GM23248 (cell line): ENCODE measurements at regions of chr10 and their contacts with region 1.

Region 1: DNA sequence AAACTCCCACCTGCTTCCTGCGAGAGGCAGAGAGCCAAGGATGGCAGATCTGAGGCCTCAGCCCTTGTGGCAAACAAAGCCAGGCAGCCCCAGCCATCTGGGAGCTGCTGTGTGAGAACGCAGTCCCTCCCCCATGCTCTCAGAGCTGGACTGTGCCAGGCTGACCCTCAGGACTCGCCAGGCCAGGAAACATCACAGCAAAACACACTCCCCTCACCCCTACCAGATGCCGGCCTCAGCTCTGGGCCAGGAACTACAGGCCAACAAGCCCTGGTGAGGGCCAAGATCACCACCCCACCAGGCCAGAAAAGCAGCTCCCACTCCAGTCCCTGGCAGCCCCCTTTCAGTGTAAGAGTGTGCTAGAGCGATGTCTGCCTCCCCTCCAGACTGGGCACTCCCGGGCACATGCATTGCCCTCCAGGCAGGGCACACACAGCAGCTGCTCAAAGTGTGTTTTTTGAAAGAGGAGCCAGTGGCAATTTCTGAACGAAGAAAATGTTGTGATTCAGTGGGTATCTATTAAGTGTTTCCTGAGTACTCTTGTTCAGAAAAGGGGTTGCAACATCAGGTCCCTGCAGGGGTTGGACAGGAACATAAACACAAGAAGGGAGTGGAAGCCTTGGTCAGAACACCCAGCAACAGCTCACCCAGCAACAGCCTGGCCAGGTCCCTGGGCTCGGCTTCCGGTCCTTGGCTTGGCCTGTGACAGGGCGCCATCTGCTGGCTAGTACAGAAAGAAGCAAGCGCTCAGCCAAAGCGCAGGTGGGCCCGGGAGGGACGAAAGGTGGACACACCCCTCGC is 18.3 kb downstream of the LRRC20 start:
- DNase-seq: peak; percentile 98
- H3K4me3 ChIP-seq: no peak overlapping the region
- H3K27ac ChIP-seq: peak overlapping the region; percentile 84
- H3K4me1 ChIP-seq: peaks cover 9% of the 10 kb centered on the region
- H3K27me3 ChIP-seq: no peaks in the 10 kb centered on the region

Region 2: DNA sequence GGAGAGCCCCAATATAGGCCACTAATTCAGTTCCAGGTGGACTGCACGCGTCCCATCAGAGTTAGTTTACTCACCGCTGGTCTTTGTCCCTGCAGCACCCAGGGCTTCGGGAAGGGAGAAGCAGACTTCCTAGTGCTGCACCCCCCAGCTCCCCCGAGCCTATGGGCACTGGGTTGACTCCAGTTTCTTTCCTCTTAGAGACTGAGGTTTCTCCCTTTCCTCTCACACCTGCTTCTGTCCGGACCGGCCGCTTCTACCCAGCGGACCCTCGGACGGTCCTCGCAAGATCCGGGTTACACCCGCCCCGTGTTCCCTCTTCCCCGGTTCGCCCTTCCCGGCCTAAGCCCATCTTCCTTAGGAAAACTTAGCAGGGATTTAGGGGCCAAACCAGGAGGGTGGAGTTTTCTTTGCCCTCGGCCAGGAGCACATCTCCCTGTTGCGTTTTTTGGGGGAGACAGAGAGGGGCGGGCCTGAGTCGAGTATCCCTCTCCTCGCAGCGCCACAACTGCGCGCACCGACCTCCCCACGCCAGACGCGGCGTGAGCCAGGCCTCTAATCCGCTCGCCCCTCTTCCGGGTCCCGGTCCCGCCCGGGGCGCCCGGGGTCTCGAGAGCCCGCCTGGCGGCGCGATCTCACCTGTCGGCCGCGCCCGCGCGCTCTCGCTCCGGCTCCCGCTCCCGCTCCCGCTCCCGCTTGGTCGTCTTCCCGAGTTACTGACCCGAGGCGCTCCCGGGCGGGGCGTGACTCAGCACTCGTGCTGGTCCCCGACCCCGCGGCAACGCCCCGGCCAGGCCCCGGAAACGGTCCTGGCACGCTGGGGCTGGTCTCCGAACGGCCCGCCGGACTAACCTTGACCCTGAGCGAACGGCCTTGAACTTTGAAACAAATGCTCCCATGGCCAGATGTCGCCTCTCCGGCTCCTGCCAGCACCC is 231.8 kb before region 1 on chr10 and contains the start of gene AIFM2:
- in situ Hi-C with region 1: no loop called
- DNase-seq: peak; percentile 91
- H3K4me3 ChIP-seq: peak within 1 kb of the TSS; percentile 74
- H3K27ac ChIP-seq: peak within 1 kb of the TSS; percentile 24; the same call in 1 of the 2 replicates
- H3K4me1 ChIP-seq: peaks cover 19% of the 10 kb centered on the region
- H3K27me3 ChIP-seq: no peaks in the 10 kb centered on the region
- total RNA-seq, gene AIFM2: 5.7 and 7.1 TPM in 2 replicates

Region 3: GRCh38 chr10:70221030-70221429 is 143.1 kb before region 1 on chr10:
- in situ Hi-C with region 1: loop called (anchors 5 kb)
- DNase-seq: no peak
- H3K4me3 ChIP-seq: no peak overlapping the region
- H3K27ac ChIP-seq: no peak overlapping the region
- H3K4me1 ChIP-seq: 0 out of 2 replicates have a peak, but pooled peaks cover 4% of the 10 kb centered on the region
- H3K27me3 ChIP-seq: no peaks in the 10 kb centered on the region

Region 4: DNA sequence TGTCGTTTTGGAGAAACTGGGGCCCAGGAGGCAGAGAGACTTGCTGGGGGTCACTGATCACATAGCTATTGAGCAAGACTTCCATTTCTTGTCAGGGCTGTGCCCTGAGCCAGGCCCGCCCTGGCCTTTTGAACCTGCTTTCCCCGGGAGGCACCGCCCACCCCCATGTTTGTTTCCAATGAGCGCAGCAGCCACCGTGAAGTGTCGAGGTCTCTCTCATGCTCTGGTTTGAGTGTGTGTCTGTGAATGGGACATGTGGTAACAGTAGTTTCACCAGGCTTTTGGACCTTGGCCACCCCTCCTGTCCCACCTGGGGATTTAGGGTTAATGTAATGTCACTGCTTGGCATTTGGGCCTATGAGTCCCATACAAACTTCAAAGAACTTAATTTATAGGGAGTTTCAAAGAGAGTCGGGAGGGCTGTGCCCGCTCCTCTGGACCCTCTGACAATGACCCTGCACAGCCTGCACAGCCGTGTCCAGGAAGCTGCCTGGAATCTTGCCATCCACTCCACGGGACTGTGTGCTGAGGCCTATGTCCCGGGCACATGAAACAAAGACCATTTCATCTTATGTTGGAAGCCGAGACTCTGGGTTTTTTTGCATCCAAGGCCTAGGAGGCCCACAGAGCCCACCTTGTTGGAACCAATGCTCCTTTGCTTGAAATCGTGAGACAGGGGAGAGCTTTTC is 232.1 kb after region 1 on chr10:
- in situ Hi-C with region 1: no loop called
- DNase-seq: no peak
- H3K4me3 ChIP-seq: no peak overlapping the region
- H3K27ac ChIP-seq: no peak overlapping the region
- H3K4me1 ChIP-seq: no peaks in the 10 kb centered on the region
- H3K27me3 ChIP-seq: peaks cover 10% of the 10 kb centered on the region; the same call in 1 of the 2 replicates

Region 5: DNA sequence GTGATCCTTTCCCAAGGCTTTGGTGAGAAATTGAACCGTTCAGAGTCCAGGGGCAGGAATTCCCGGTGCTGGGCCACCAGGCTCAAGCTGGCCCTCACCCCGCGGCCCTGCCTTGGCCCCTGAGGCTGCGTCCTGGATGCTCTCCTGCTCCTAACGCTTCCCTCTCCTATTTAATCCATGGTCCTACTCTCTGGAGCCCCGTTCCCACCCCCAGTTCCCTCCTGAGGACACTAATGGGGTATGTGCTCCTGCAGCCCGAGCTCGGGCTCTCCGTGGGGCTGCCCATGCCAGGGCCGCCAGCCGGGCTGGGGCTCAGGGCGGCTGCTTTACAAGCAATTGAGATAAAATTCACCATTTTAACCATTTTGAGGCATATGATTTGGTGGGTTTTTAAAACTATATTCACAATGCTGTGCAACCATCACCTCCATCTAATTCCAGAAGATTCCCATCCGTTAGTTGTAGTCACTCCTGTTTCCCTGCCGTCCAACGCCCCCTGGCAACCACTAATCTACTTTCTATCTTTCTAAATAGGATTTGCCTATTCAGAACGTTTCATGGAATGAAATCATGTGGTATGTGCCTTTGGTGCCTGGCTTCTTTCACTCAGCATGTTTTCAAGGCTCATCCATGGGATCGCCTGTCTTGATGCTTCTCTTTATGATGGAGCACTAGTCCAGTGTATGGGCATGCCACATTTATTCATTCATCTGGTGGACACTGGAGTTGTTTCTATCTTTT is 341.1 kb after region 1 on chr10:
- in situ Hi-C with region 1: no loop called
- DNase-seq: no peak
- H3K4me3 ChIP-seq: no peak overlapping the region
- H3K27ac ChIP-seq: no peak overlapping the region
- H3K4me1 ChIP-seq: no peaks in the 10 kb centered on the region
- H3K27me3 ChIP-seq: no peaks in the 10 kb centered on the region